ENCODE measurements at regions of chr2 and their contacts with region 1.

Region 1: GRCh38 chr2:226800941-226801784 is 1.5 kb upstream of the IRS1 start:
- H3K4me3 ChIP-seq: no peak overlapping the region
- H3K27ac ChIP-seq: 0 out of 2 replicates have a peak overlapping the region, but pooled peaks have one; percentile 97
- H3K4me1 ChIP-seq: no peaks in the 10 kb centered on the region; the same call in 1 of the 2 replicates
- CTCF ChIP-seq: no peak

Region 2: DNA sequence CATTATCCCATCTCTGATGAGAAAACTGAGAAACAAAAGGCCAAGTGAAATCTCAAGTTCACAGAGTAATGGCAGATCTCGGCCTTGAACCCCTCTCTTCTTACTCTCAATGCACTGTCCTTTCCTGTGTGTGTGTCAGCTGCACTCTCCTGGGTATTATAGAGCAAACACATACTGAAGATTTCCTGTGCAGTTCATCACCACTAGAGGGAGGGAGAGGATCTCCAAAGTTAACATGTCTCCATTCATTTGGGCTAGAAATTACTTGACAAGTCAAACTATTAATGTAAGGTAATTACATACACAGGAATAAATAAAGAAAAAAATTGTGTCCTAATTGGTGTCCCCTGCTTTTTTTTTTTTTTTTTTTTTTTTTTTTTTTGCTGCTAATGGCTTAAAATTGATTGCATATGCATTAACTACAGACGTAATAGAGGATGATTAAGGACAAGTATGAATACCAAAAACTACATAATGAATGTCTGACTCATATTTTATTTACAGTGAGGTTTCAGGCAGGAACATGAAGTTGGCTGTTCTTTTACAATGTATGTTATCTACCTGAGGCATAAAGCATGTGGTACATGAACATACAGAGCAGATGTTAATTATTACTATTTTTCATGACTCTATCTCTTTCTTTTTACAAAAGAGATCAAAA is 1132.4 kb before region 1 on chr2:
- CTCF ChIA-PET with region 1: interaction called, 11 read pairs
- POLR2A ChIA-PET with region 1: interaction called, 3 read pairs
- H3K4me3 ChIP-seq: no peak overlapping the region
- H3K27ac ChIP-seq: no peak overlapping the region
- H3K4me1 ChIP-seq: no peaks in the 10 kb centered on the region
- CTCF ChIP-seq: no peak

Region 3: DNA sequence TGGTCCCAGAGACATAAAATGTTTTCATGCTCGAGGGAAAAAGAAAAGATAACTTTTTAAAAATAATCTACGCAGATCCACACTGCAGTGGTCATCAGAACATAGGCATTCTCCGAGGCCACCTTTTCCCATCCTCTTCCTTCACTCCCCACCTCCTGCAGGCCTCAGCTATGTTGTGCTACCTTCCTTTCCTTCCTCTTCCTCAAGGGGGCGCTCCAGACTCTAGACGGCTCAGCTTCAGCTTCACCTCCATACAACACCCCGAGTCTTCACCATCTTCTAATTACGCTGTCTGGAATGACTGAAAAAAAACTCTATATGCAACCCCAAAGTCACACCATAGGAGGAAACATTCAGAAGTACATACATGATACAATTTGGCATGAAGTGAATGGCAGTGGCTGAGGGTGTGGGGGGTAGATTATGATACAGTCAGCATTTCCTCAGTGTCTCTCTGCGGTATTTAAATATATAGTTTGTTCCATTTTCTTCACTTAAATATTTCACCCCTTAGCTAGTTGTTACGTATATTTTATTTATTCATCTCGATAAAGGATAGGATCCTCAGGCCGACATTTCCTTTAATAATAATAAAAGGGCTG is 585.2 kb before region 1 on chr2:
- CTCF ChIA-PET with region 1: interaction called, 17 read pairs
- POLR2A ChIA-PET with region 1: no interaction called
- H3K4me3 ChIP-seq: no peak overlapping the region
- H3K27ac ChIP-seq: no peak overlapping the region
- H3K4me1 ChIP-seq: no peaks in the 10 kb centered on the region
- CTCF ChIP-seq: peak; percentile 46; the same call in 1 of the 2 replicates

Region 4: GRCh38 chr2:226674123-226674522 is 127.0 kb before region 1 on chr2:
- CTCF ChIA-PET with region 1: interaction called, 12 read pairs
- POLR2A ChIA-PET with region 1: no interaction called
- H3K4me3 ChIP-seq: no peak overlapping the region
- H3K27ac ChIP-seq: no peak overlapping the region
- H3K4me1 ChIP-seq: peaks cover 11% of the 10 kb centered on the region
- CTCF ChIP-seq: no peak

Measured in HEK293 (cell line).